CD4-positive, alpha-beta T cell (primary cell): ENCODE measurements at regions of chr2 and their contacts with region 1.

Region 1: DNA sequence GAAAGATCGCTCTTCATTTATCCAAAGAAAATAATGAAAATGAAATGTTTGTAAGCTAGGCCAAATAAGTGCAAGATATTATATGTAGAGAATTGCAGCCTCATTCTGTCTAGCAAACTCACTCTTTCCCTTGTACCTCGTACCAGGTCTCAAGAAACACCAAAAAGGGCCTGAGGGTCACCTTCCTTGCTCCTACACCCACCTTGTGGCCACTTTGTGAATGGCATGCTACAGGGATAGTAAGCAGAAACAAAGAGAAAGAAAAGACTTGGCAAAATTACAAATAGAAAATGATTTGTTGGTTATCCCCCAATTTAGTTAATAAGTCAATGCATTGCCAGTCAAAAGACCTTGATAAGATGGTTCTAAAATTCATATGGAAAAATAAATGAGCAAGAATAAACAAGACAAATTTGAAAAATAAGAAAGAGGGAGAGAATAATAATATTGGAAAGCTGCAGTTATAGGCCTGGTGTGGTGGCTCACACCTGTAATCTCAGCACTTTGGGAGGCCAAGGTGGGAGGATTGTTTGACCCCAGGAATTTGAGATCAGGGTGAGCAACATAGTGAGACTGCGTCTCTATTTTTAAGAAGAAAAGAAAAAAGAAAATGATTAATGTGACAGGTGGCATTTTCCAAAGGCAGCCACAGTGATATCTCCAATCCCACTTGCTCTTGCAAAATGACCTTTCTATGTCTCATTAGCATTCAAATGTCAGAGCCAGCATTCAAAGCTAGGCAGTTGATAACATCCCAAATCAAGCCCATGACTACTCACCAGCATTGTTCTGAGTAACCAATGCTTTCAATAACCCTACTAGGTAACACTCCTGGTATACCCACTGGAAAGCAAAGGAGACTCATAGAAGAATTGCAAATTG is 38.8 kb upstream of the BMP10 start:
- DNase-seq: peak; percentile 44 to 84 (median 66)
- ATAC-seq: no peak
- H3K4me3 ChIP-seq: no peak overlapping the region
- H3K4me3 Mint-ChIP-seq: no peak overlapping the region
- H3K27ac ChIP-seq: no peak overlapping the region
- H3K27ac Mint-ChIP-seq: no peak overlapping the region
- H3K4me1 ChIP-seq: peaks cover 60% of the 10 kb centered on the region
- H3K4me1 Mint-ChIP-seq: peaks cover 36% of the 10 kb centered on the region
- H3K27me3 ChIP-seq: no peaks in the 10 kb centered on the region
- H3K27me3 Mint-ChIP-seq: no peaks in the 10 kb centered on the region
- CTCF ChIP-seq: peak; percentile 88

Region 2: DNA sequence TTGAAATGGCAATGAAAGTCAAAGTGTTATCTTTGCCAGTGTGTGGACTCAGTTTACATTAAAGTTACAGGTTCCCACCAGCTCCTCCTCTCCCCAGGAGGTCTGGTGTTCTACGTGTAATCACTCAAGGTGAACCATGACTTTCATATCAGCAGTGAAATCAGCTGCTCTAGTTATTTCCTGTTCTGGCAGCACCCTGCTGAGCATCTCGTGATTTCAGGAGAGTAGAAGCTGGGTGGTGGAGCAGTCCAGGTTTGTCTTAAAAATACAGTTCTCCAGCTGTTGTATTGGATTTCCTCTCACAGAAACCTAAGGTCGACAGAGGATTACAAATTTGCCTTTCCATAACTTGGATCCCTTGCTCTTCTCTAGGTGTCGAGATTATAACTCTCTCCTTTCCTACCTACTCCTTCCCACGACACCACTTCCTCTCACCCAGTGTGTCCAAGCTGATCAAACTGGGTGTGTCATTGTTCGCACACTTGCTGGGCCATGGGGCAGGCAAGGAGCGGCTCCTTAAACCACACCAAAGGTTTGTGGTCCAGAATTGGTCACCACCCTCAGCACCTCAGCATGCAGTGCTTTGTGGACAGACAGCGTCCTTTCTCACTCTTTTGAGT is 188.4 kb before region 1 on chr2:
- CTCF ChIA-PET with region 1: no interaction called
- POLR2A ChIA-PET with region 1: interaction called, 23 read pairs
- intact Hi-C with region 1: no loop called
- DNase-seq: peak in 6 of 14 experiments; percentile 25 to 82 (median 68)
- ATAC-seq: peak; percentile 83
- H3K4me3 ChIP-seq: peak overlapping the region; percentile 19
- H3K4me3 Mint-ChIP-seq: peak overlapping the region; percentile 82
- H3K27ac ChIP-seq: peak overlapping the region; percentile 72 to 76
- H3K27ac Mint-ChIP-seq: peak overlapping the region; percentile 83
- H3K4me1 ChIP-seq: peaks cover 88% of the 10 kb centered on the region
- H3K4me1 Mint-ChIP-seq: peaks cover 96% of the 10 kb centered on the region
- H3K27me3 ChIP-seq: no peaks in the 10 kb centered on the region
- H3K27me3 Mint-ChIP-seq: no peaks in the 10 kb centered on the region
- CTCF ChIP-seq: no peak

Region 3: GRCh38 chr2:68734688-68735525 is 175.1 kb before region 1 on chr2 and contains the start of gene ARHGAP25:
- CTCF ChIA-PET with region 1: interaction called, 3 read pairs
- POLR2A ChIA-PET with region 1: interaction called, 14 read pairs
- intact Hi-C with region 1: loop called in 1 of 2 experiments (anchors 5 kb)
- DNase-seq: peak in 10 of 14 experiments; percentile 23 to 87 (median 45)
- ATAC-seq: peak; percentile 71
- H3K4me3 ChIP-seq: peak within 1 kb of the TSS; percentile 73
- H3K4me3 Mint-ChIP-seq: no peak within 1 kb of the TSS
- H3K27ac ChIP-seq: peak within 1 kb of the TSS; percentile 72 to 81
- H3K27ac Mint-ChIP-seq: no peak within 1 kb of the TSS
- H3K4me1 ChIP-seq: peaks cover 49% of the 10 kb centered on the region
- H3K4me1 Mint-ChIP-seq: peaks cover 40% of the 10 kb centered on the region
- H3K27me3 ChIP-seq: no peaks in the 10 kb centered on the region
- H3K27me3 Mint-ChIP-seq: no peaks in the 10 kb centered on the region
- CTCF ChIP-seq: no peak
- total RNA-seq, gene ARHGAP25: 39.3 to 41.8 TPM

Region 4: DNA sequence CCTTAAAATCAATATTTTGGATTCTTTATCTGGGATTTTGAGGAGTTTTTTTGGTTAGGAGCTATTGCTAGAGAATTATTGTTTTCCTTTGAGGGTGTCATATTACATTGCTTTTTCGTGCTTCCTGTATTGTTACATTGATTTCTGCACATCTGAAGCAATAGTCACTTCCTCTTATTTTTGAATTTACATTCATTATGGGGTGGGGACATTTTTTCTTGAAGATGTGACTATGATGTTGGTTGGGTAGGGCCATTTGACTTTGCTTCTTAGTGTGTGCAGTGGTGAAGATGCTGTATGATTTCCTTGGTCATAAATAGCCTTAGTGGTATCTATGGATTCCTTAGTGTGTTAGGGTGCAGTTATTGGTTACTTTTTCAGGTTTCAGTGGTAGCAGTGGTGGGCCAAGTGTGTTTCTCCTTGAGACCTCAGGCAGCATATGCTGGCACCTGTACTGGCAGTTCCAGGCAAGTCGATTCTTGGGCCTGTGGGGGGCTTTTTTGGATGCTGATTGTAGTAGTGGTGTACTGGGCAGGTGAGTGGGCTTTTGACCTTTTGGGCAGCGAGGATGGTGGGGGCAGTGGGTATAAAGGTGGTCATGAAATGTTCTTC is 113.6 kb before region 1 on chr2:
- CTCF ChIA-PET with region 1: no interaction called
- POLR2A ChIA-PET with region 1: no interaction called
- intact Hi-C with region 1: no loop called
- DNase-seq: peak in 3 of 14 experiments; percentile 50 to 61 (median 51)
- ATAC-seq: peak; percentile 87
- H3K4me3 ChIP-seq: no peak overlapping the region
- H3K4me3 Mint-ChIP-seq: peak overlapping the region; percentile 76
- H3K27ac ChIP-seq: peak overlapping the region; percentile 25 to 58
- H3K27ac Mint-ChIP-seq: peak overlapping the region; percentile 91
- H3K4me1 ChIP-seq: peaks cover 40% of the 10 kb centered on the region
- H3K4me1 Mint-ChIP-seq: peaks cover 89% of the 10 kb centered on the region
- H3K27me3 ChIP-seq: no peaks in the 10 kb centered on the region
- H3K27me3 Mint-ChIP-seq: no peaks in the 10 kb centered on the region
- CTCF ChIP-seq: no peak

Region 5: DNA sequence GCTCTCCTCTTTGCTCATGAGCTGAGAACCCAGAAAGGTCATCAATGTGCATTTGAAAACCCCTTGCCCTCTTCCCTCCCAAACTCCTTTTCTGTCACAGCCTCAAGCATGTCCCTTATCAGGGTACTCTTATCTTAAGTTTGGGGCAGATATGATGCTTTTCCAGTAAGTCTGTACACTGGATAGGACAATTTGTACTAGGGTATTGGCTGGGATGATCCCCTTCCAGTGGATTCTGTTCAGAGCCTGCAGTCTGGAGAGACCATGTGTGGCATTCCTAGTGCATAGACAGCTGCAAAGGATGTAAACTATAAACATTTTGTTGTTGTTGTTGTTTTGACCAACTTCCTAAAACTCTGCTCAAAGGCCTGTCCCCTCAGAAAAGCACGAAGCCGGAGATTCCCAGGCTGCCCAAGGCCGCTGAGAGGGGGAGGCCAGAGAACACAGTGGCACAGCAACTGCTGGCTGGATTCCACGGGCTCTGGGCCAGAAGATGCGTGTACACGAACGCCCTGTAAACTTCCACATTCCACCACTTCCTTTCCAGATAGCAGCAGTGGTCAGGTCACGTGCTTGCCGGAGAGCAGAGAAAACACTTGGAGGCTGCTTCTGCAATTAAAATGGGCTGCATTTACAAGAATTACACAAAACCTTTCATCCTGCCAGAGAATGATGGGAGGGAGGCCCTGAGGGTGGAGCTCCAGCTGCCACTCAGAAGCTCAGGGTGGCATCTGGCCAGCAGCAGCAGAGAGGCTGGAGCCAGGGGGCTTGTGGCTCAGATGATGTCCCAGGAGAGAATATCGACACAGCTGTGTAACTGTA is 80.9 kb before region 1 on chr2:
- CTCF ChIA-PET with region 1: interaction called, 4 read pairs
- POLR2A ChIA-PET with region 1: interaction called, 14 read pairs
- intact Hi-C with region 1: loop called in 1 of 2 experiments (anchors 2 kb)
- DNase-seq: peak; percentile 40 to 91 (median 64)
- ATAC-seq: peak; percentile 86
- H3K4me3 ChIP-seq: no peak overlapping the region
- H3K4me3 Mint-ChIP-seq: peak overlapping the region; percentile 68
- H3K27ac ChIP-seq: peak overlapping the region; percentile 69 to 70
- H3K27ac Mint-ChIP-seq: peak overlapping the region; percentile 87
- H3K4me1 ChIP-seq: peaks cover 44% of the 10 kb centered on the region
- H3K4me1 Mint-ChIP-seq: peaks cover 74% of the 10 kb centered on the region
- H3K27me3 ChIP-seq: no peaks in the 10 kb centered on the region
- H3K27me3 Mint-ChIP-seq: no peaks in the 10 kb centered on the region
- CTCF ChIP-seq: no peak

Region 6: DNA sequence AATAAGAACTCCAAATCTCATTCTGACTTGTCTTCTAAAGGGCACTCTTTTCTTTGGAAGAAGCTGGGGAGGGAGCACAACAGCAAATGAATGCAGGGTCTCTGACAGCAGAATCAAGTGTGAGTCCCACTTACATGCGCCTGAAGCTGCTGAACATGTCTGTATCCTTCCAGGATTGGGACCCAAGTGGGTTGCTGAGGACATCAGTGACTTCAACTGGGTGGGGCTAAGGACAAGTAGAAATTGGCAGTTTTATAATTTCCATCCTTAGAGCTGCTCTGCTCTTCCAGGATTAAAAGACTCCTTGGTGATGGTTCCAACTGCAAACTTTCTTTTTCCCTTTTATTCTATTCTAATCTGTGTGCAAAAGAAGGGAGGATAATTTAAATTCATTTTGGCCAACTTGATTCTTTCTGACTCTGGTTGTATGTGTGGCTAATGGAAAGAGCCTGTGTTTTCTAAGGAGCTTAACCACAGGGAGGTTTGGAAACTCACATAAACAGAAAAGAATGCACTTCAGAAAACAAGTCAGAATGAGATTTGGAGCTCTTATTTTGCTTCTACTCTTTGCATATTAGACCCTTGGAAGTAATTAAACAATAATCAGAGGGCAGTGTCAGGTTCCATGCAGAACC is 123.5 kb after region 1 on chr2:
- CTCF ChIA-PET with region 1: no interaction called
- POLR2A ChIA-PET with region 1: no interaction called
- intact Hi-C with region 1: no loop called
- DNase-seq: no peak
- ATAC-seq: no peak
- H3K4me3 ChIP-seq: no peak overlapping the region
- H3K4me3 Mint-ChIP-seq: no peak overlapping the region
- H3K27ac ChIP-seq: no peak overlapping the region
- H3K27ac Mint-ChIP-seq: no peak overlapping the region
- H3K4me1 ChIP-seq: no peaks in the 10 kb centered on the region
- H3K4me1 Mint-ChIP-seq: no peaks in the 10 kb centered on the region
- H3K27me3 ChIP-seq: peaks cover 2 to 8% of the 10 kb centered on the region in 2 experiments
- H3K27me3 Mint-ChIP-seq: peaks cover 16% of the 10 kb centered on the region
- CTCF ChIP-seq: no peak